ENCODE measurements at regions of chr20 and their contacts with region 1.

Region 1: DNA sequence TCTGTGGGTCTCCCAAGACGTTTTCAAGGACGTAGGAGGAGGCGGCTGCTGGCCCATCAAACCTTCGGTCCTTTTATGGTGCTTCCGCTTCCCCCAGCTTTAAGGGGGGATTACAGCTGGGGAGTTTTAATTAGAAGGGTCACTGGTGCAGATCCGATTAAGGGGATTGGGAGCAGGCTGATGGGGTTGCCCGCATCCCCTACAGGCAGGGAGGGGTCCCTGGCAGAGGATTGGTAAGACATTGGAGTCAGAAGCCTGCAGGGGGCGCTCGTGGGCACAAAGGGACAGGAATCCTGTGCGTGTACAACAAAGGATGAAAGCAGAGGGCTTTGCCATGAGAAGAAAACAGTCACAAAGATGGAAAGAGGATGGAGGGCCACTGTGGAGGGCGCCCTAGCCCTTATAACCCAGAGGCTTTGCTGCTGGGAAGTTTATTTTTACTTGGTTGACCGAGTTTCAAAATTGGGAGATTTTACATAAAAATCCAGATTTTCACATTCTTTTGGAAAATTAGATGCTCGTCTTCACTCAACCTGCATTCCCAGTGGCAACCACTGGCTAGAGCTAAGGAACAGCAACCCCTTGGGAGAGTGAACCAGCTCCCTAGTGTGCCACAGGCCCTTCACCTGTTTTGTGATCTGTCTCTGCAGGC is 97.9 kb downstream of the KCNB1 start:
- DNase-seq: peak; percentile 53
- ATAC-seq: peak; percentile 67
- H3K4me3 ChIP-seq: no peak overlapping the region
- H3K27ac ChIP-seq: no peak overlapping the region
- H3K4me1 ChIP-seq: peaks cover 14 to 22% of the 10 kb centered on the region in 2 experiments; a peak in 3 of 4 replicates
- H3K27me3 ChIP-seq: no peaks in the 10 kb centered on the region
- CTCF ChIP-seq: peak; percentile 51 to 94 (median 85); a peak in 5 of 6 replicates
- POLR2A ChIP-seq: no peak
- RAD21 ChIP-seq: peak; percentile 38; the same call in 1 of the 2 replicates

Region 2: DNA sequence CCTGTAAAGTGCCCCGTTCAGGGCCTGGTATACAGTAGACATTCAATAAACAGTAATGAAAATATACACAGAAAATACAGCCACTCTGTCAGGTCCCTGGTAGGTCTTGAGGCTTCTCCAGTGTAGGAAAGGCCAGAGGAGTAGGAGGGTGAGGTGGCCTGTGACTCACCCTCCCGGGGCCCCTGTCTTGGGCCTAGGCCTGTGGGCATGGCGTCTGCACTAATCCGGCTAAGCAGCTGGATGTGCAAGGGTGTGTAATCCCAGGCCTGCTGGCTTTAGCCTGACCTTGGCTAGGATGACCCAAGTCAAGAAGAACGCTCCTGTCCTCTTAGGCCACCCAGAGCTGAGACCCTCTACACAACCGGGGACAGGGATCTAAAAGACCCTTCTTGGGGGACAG is 13.0 kb after region 1 on chr20:
- CTCF ChIA-PET with region 1: interaction called, 16 read pairs
- POLR2A ChIA-PET with region 1: no interaction called
- RAD21 ChIA-PET with region 1: no interaction called
- intact Hi-C with region 1: no loop called
- DNase-seq: no peak
- ATAC-seq: peak; percentile 44
- H3K4me3 ChIP-seq: no peak overlapping the region
- H3K27ac ChIP-seq: no peak overlapping the region
- H3K4me1 ChIP-seq: peaks cover 2 to 14% of the 10 kb centered on the region in 2 experiments; a peak in 1 of 4 replicates
- H3K27me3 ChIP-seq: peaks cover 10% of the 10 kb centered on the region; the same call in 1 of the 2 replicates
- CTCF ChIP-seq: no peak
- POLR2A ChIP-seq: no peak
- RAD21 ChIP-seq: no peak

Region 3: GRCh38 chr20:49484180-49485140 is 99.9 kb after region 1 on chr20:
- CTCF ChIA-PET with region 1: interaction called, 23 read pairs
- POLR2A ChIA-PET with region 1: no interaction called
- RAD21 ChIA-PET with region 1: interaction called, 3 to 8 read pairs
- intact Hi-C with region 1: loop called (anchors 5 kb)
- DNase-seq: peak; percentile 31
- ATAC-seq: peak; percentile 98
- H3K4me3 ChIP-seq: peak overlapping the region; percentile 32 to 56
- H3K27ac ChIP-seq: no peak overlapping the region
- H3K4me1 ChIP-seq: peaks cover 0 to 10% of the 10 kb centered on the region in 2 experiments; a peak in 1 of 4 replicates
- H3K27me3 ChIP-seq: peaks cover 24% of the 10 kb centered on the region; the same call in 1 of the 2 replicates
- CTCF ChIP-seq: peak; percentile 61 to 86 (median 81)
- POLR2A ChIP-seq: no peak
- RAD21 ChIP-seq: peak; percentile 79